Natural killer cell (primary cell): ENCODE measurements at regions of chr14 and their contacts with region 1.

Region 1: DNA sequence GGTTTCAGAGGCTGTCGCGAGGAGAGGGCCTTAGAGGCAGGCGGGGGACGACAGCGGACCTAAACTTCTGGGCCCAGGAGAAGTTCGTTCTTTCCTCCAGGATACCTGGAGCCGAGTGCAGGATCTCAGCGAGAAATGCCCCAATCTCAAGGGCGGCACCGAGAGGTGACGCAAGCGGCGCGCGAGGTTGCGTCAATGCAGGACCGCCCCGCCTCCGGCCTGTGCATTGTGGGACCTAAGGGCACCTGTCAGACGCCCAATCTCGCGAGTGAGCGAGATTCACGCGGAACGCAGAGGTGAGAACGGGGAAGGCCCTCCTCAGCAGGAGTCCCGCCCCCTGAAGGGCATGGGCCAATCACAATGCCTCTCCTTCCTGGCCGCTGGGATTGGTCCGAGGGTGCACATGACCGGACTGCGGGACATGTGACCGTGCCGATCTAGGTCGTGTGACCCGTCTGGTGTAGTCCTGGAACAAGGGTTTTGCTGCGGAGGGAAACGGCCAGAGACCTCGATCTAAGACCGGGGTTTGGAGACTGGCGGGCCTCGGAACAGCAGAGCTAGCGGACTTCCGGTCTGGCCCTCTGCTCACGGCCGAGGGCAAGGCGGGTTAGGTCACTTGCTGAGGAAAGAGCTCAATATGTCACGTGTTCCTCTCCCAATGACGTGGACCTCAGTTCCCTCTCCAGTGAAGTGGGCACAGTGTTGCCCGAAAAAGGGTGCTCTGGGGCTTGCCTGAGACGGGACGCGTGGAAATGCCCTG is 16.3 kb upstream of the DYNC1H1 start:
- DNase-seq: peak; percentile 99 to 100
- ATAC-seq: peak; percentile 93 to 97 (median 93)
- H3K4me3 ChIP-seq: peak overlapping the region; percentile 91
- H3K4me3 Mint-ChIP-seq: peak overlapping the region; percentile 96
- H3K27ac ChIP-seq: peak overlapping the region; percentile 100
- H3K27ac Mint-ChIP-seq: peak overlapping the region; percentile 100
- H3K4me1 ChIP-seq: peaks cover 20% of the 10 kb centered on the region
- H3K4me1 Mint-ChIP-seq: peaks cover 18 to 27% of the 10 kb centered on the region in 2 donors
- H3K27me3 ChIP-seq: peaks cover 2% of the 10 kb centered on the region
- H3K27me3 Mint-ChIP-seq: peaks cover 7 to 11% of the 10 kb centered on the region in 2 donors
- CTCF ChIP-seq: no peak

Region 2: GRCh38 chr14:101707068-101707842 is 240.8 kb before region 1 on chr14:
- intact Hi-C with region 1: loop called (anchors 2 kb)
- DNase-seq: peak in 1 of 2 donors; percentile 94
- ATAC-seq: peak; percentile 69 to 86 (median 71)
- H3K4me3 ChIP-seq: no peak overlapping the region
- H3K4me3 Mint-ChIP-seq: peak overlapping the region; percentile 57
- H3K27ac ChIP-seq: peak overlapping the region; percentile 75
- H3K27ac Mint-ChIP-seq: peak overlapping the region; percentile 90
- H3K4me1 ChIP-seq: peaks cover 55% of the 10 kb centered on the region
- H3K4me1 Mint-ChIP-seq: peaks cover 46 to 67% of the 10 kb centered on the region in 2 donors
- H3K27me3 ChIP-seq: no peaks in the 10 kb centered on the region
- H3K27me3 Mint-ChIP-seq: peaks cover 2 to 9% of the 10 kb centered on the region in 2 donors
- CTCF ChIP-seq: peak; percentile 86

Region 3: GRCh38 chr14:101774006-101774795 is 173.9 kb before region 1 on chr14:
- intact Hi-C with region 1: loop called (anchors 5 kb)
- DNase-seq: no peak
- ATAC-seq: no peak
- H3K4me3 ChIP-seq: no peak overlapping the region
- H3K4me3 Mint-ChIP-seq: no peak overlapping the region
- H3K27ac ChIP-seq: no peak overlapping the region
- H3K27ac Mint-ChIP-seq: peak overlapping the region; percentile 47 to 56
- H3K4me1 ChIP-seq: peaks cover 26% of the 10 kb centered on the region
- H3K4me1 Mint-ChIP-seq: peaks cover 40 to 57% of the 10 kb centered on the region in 2 donors
- H3K27me3 ChIP-seq: no peaks in the 10 kb centered on the region
- H3K27me3 Mint-ChIP-seq: peaks cover 0 to 2% of the 10 kb centered on the region in 2 donors
- CTCF ChIP-seq: no peak

Region 4: GRCh38 chr14:101876555-101876938 is 71.5 kb before region 1 on chr14:
- intact Hi-C with region 1: loop called (anchors 5 kb)
- DNase-seq: peak; percentile 58 to 91
- ATAC-seq: peak; percentile 59 to 84 (median 74)
- H3K4me3 ChIP-seq: no peak overlapping the region
- H3K4me3 Mint-ChIP-seq: peak overlapping the region; percentile 76
- H3K27ac ChIP-seq: peak overlapping the region; percentile 86
- H3K27ac Mint-ChIP-seq: peak overlapping the region; percentile 93 to 94
- H3K4me1 ChIP-seq: peaks cover 62% of the 10 kb centered on the region
- H3K4me1 Mint-ChIP-seq: peaks cover 81 to 89% of the 10 kb centered on the region in 2 donors
- H3K27me3 ChIP-seq: no peaks in the 10 kb centered on the region
- H3K27me3 Mint-ChIP-seq: no peaks in the 10 kb centered on the region
- CTCF ChIP-seq: no peak

Region 5: DNA sequence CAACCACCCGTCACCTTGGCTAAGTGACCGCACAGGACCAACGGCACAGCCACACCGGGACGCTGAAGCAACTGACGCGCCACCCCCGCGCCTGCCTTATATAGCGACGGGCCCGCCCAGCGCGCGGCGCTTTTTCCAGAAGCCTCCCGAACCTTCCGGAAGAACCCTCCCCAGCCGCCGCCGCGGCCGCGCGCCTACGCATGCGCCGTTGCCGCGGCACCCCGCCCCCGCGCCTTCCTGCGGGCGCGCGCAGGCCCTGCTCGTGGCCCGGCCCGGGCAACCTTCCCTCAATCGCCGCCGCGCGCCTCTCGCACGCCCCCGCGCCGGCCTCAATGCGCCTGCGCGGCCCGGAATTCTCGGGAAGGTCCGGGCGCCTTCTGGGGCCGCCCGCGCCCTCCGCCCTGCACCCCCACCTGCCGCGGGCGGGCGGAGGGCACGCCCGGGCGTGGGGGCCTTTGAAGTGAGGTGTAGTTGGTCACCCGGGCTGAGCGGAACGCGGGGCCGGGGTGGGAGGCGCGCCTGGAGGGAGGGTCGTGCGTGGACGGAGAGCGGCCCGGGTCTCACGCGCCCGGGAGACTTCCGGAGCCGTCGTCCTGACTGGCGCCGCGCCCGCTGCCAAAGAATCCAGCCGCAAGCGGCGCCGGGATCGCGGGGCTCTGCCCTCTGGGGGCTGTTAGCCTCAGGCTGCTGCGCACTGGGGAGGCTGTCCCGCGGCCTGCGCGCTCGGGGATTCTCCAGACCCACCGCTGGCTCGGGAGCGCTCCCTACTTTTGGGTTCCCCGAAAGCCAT is 139.1 kb after region 1 on chr14 and contains the start of gene HSP90AA1:
- intact Hi-C with region 1: loop called (anchors 1 kb)
- DNase-seq: peak; percentile 96 to 97
- ATAC-seq: peak; percentile 69 to 88 (median 78)
- H3K4me3 ChIP-seq: peak within 1 kb of the TSS; percentile 62
- H3K4me3 Mint-ChIP-seq: peak within 1 kb of the TSS; percentile 95
- H3K27ac ChIP-seq: peak within 1 kb of the TSS; percentile 99
- H3K27ac Mint-ChIP-seq: peak within 1 kb of the TSS; percentile 37 to 95
- H3K4me1 ChIP-seq: peaks cover 30% of the 10 kb centered on the region
- H3K4me1 Mint-ChIP-seq: peaks cover 56% of the 10 kb centered on the region in 2 donors
- H3K27me3 ChIP-seq: no peaks in the 10 kb centered on the region
- H3K27me3 Mint-ChIP-seq: no peaks in the 10 kb centered on the region
- CTCF ChIP-seq: no peak
- total RNA-seq, gene HSP90AA1: 470 to 665 (median 663) TPM

Region 6: GRCh38 chr14:102316743-102317563 is 368.9 kb after region 1 on chr14:
- intact Hi-C with region 1: loop called (anchors 5 kb)
- DNase-seq: peak; percentile 94 to 96
- ATAC-seq: peak; percentile 68 to 83 (median 73)
- H3K4me3 ChIP-seq: peak overlapping the region; percentile 65
- H3K4me3 Mint-ChIP-seq: peak overlapping the region; percentile 97
- H3K27ac ChIP-seq: peak overlapping the region; percentile 68
- H3K27ac Mint-ChIP-seq: peak overlapping the region; percentile 98 to 99
- H3K4me1 ChIP-seq: peaks cover 53% of the 10 kb centered on the region
- H3K4me1 Mint-ChIP-seq: peaks cover 57 to 58% of the 10 kb centered on the region in 2 donors
- H3K27me3 ChIP-seq: no peaks in the 10 kb centered on the region
- H3K27me3 Mint-ChIP-seq: no peaks in the 10 kb centered on the region
- CTCF ChIP-seq: peak; percentile 88